B cell (primary cell): ENCODE measurements at regions of chr10 and their contacts with region 1.

Region 1: DNA sequence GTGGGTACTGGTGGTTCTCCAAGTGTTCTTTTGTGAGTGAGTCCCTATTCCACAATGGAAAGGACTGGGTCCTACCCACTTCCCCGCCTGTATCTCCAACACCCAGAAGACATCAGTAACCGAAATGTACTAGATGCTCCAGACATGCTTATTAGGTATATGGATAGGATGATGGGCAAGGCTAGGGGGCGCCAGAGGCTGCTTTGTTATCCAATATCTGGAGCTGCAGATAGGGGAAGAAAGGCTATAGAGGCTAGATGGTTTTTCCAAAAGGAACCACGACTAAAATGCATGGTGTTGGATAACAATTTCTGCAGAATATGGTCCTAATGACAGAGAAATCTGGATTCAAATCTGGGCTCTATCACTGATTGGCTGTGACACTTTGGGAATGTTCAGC is 56.2 kb upstream of the TM9SF3 start:
- DNase-seq: peak; percentile 81
- ATAC-seq: no peak
- H3K4me3 ChIP-seq: no peak overlapping the region
- H3K4me3 Mint-ChIP-seq: no peak overlapping the region
- H3K27ac ChIP-seq: peak overlapping the region in 1 of 2 donors; percentile 76
- H3K27ac Mint-ChIP-seq: peak overlapping the region; percentile 74
- H3K4me1 ChIP-seq: peaks cover 39 to 57% of the 10 kb centered on the region in 2 donors
- H3K4me1 Mint-ChIP-seq: peaks cover 49% of the 10 kb centered on the region
- H3K27me3 ChIP-seq: no peaks in the 10 kb centered on the region
- H3K27me3 Mint-ChIP-seq: no peaks in the 10 kb centered on the region
- CTCF ChIP-seq: peak; percentile 73

Region 2: DNA sequence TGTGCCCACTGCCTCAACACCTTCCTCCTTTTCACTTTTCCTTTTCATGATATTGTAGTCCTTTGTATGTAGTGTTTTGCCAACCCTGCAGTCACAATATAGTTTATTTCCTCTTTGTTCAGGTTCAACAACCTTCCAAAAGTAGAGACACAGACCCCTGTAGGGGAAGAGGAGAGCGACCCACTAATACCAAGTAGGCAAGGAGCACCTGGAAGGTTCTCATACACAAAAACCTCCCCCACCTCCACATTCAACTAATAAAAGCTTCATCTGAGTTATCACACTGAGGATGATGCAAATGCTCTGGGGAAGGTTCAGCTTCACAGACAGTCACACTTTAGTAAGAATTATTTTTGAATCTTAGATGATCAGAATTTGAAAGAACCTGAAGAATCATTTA is 35.8 kb after region 1 on chr10:
- CTCF ChIA-PET with region 1: interaction called, 10 read pairs
- POLR2A ChIA-PET with region 1: interaction called, 3 read pairs
- intact Hi-C with region 1: no loop called
- DNase-seq: peak; percentile 56
- ATAC-seq: peak; percentile 37
- H3K4me3 ChIP-seq: no peak overlapping the region
- H3K4me3 Mint-ChIP-seq: peak overlapping the region; percentile 31
- H3K27ac ChIP-seq: peak overlapping the region; percentile 54 to 97
- H3K27ac Mint-ChIP-seq: peak overlapping the region; percentile 82
- H3K4me1 ChIP-seq: peaks cover 86 to 89% of the 10 kb centered on the region in 2 donors
- H3K4me1 Mint-ChIP-seq: peaks cover 86% of the 10 kb centered on the region
- H3K27me3 ChIP-seq: no peaks in the 10 kb centered on the region
- H3K27me3 Mint-ChIP-seq: no peaks in the 10 kb centered on the region
- CTCF ChIP-seq: no peak

Region 3: GRCh38 chr10:96708456-96708855 is 65.5 kb after region 1 on chr10:
- CTCF ChIA-PET with region 1: interaction called, 12 read pairs
- POLR2A ChIA-PET with region 1: interaction called, 9 read pairs
- intact Hi-C with region 1: loop called (anchors 1 kb)
- DNase-seq: peak; percentile 82
- ATAC-seq: peak; percentile 80
- H3K4me3 ChIP-seq: no peak overlapping the region
- H3K4me3 Mint-ChIP-seq: peak overlapping the region; percentile 70
- H3K27ac ChIP-seq: peak overlapping the region; percentile 87 to 92
- H3K27ac Mint-ChIP-seq: peak overlapping the region; percentile 91
- H3K4me1 ChIP-seq: peaks cover 77 to 86% of the 10 kb centered on the region in 2 donors
- H3K4me1 Mint-ChIP-seq: peaks cover 78% of the 10 kb centered on the region
- H3K27me3 ChIP-seq: no peaks in the 10 kb centered on the region
- H3K27me3 Mint-ChIP-seq: no peaks in the 10 kb centered on the region
- CTCF ChIP-seq: no peak

Region 4: GRCh38 chr10:96758423-96758822 is 115.5 kb after region 1 on chr10:
- CTCF ChIA-PET with region 1: interaction called, 67 read pairs
- POLR2A ChIA-PET with region 1: interaction called, 9 read pairs
- intact Hi-C with region 1: no loop called
- DNase-seq: peak; percentile 62
- ATAC-seq: peak; percentile 64
- H3K4me3 ChIP-seq: peak overlapping the region in 2 of 5 experiments; percentile 6 to 22
- H3K4me3 Mint-ChIP-seq: peak overlapping the region; percentile 68
- H3K27ac ChIP-seq: peak overlapping the region; percentile 17 to 76
- H3K27ac Mint-ChIP-seq: peak overlapping the region; percentile 86
- H3K4me1 ChIP-seq: peaks cover 47 to 55% of the 10 kb centered on the region in 2 donors
- H3K4me1 Mint-ChIP-seq: peaks cover 60% of the 10 kb centered on the region
- H3K27me3 ChIP-seq: no peaks in the 10 kb centered on the region
- H3K27me3 Mint-ChIP-seq: no peaks in the 10 kb centered on the region
- CTCF ChIP-seq: no peak

Region 5: DNA sequence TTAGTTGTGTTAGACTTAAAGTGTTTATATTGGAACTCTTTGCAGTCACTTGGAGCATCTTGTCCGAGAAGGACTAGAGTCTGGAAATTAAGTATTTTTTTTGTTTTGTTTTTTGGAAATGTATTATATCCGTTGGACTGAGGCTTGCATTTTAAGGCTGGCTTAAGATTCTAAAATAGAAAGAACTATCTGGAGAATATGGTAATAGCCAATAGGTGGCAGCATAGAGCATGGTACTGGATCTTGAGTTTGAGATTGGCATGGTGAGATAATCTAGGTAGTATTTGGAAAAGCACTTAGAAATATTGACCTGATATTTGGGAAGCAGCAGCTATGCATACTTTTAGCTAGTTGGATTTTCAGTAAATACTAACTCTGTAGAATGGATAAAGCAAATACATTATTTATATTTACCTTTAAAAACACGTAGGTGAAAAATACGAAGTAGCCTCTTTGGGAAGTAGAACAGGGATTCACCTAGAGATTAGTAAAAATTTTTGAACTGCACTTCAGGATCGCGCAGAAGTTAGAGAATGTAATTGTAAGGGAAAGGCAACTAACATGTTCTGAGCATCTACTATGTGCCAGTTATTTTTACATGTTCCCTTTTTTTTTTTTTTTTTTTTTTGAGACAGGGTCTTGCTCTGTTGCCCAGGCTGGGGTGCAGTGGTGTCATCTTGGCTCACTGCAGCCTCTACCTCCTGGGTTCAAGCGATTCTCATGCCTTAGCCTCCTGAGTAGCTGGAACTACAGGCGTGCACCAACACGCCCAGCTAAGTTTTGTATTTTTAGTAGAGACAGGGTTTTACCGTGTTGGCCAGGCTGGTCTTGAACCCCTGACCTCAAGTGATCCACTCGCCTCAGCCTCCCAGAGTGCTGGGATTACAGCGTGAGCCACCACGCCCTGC is 267.8 kb after region 1 on chr10:
- CTCF ChIA-PET with region 1: interaction called, 10 read pairs
- POLR2A ChIA-PET with region 1: no interaction called
- intact Hi-C with region 1: loop called (anchors 2 kb)
- DNase-seq: peak; percentile 63
- ATAC-seq: peak; percentile 53
- H3K4me3 ChIP-seq: no peak overlapping the region
- H3K4me3 Mint-ChIP-seq: no peak overlapping the region
- H3K27ac ChIP-seq: peak overlapping the region in 1 of 2 donors; percentile 33
- H3K27ac Mint-ChIP-seq: no peak overlapping the region
- H3K4me1 ChIP-seq: no peaks in the 10 kb centered on the region
- H3K4me1 Mint-ChIP-seq: peaks cover 13% of the 10 kb centered on the region
- H3K27me3 ChIP-seq: no peaks in the 10 kb centered on the region
- H3K27me3 Mint-ChIP-seq: no peaks in the 10 kb centered on the region
- CTCF ChIP-seq: peak; percentile 91